ENCODE measurements at regions of chr10 and their contacts with region 1.

Region 1: DNA sequence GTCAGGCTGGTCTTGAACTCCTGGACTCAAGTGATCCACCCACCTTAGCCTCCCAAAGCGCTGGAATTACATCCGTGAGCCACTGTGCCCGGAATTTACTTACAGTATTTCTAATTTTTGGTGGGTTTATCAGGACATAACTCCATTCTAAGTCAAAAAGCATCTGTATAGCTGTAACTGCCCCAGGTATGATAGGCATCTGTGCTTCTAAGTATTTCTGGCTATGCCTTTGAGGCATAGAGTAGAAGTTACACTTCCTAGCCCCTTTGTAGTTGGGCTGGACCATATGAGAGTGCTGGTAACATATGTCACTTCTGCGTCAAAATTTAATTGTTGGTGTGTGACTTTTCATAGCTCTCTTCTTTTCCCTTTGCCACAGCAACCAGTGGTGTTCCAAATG is 153.4 kb downstream of the RTKN2 start:
- DNase-seq: no peak
- ATAC-seq: no peak
- H3K4me3 ChIP-seq: no peak overlapping the region
- H3K27ac ChIP-seq: no peak overlapping the region
- H3K4me1 ChIP-seq: peaks cover 8% of the 10 kb centered on the region; the same call in 1 of the 2 replicates
- H3K27me3 ChIP-seq: no peaks in the 10 kb centered on the region
- CTCF ChIP-seq: no peak

Region 2: GRCh38 chr10:61974601-61975390 is 140.5 kb before region 1 on chr10:
- CTCF ChIA-PET with region 1: no interaction called
- POLR2A ChIA-PET with region 1: no interaction called
- in situ Hi-C with region 1: no loop called
- intact Hi-C with region 1: no loop called
- DNase-seq: no peak
- ATAC-seq: no peak
- H3K4me3 ChIP-seq: no peak overlapping the region
- H3K27ac ChIP-seq: peak overlapping the region; percentile 58
- H3K4me1 ChIP-seq: peaks cover 45% of the 10 kb centered on the region
- H3K27me3 ChIP-seq: no peaks in the 10 kb centered on the region
- CTCF ChIP-seq: no peak

Region 3: DNA sequence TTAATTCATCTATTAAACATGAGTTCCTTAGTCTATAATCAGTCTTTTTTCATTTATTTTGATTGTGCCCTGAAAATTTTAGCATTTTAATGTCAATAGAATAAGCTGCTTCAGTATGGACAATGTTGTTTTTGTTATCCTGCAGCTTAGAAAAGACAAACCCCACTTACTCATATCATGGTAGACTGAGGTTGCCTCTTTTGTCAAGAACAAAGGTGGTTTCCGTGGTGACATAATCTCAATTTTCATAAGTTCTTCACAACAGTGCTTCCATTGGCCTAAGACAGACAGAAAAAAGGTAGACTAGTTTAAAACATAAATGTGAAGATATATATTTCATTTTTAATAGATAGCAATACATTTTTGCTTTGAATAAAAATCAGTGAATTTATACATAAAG is 84.3 kb after region 1 on chr10:
- CTCF ChIA-PET with region 1: no interaction called
- POLR2A ChIA-PET with region 1: no interaction called
- in situ Hi-C with region 1: no loop called
- intact Hi-C with region 1: no loop called
- DNase-seq: no peak
- ATAC-seq: no peak
- H3K4me3 ChIP-seq: no peak overlapping the region
- H3K27ac ChIP-seq: no peak overlapping the region
- H3K4me1 ChIP-seq: peaks cover 12% of the 10 kb centered on the region; the same call in 1 of the 2 replicates
- H3K27me3 ChIP-seq: no peaks in the 10 kb centered on the region
- CTCF ChIP-seq: no peak

Region 4: DNA sequence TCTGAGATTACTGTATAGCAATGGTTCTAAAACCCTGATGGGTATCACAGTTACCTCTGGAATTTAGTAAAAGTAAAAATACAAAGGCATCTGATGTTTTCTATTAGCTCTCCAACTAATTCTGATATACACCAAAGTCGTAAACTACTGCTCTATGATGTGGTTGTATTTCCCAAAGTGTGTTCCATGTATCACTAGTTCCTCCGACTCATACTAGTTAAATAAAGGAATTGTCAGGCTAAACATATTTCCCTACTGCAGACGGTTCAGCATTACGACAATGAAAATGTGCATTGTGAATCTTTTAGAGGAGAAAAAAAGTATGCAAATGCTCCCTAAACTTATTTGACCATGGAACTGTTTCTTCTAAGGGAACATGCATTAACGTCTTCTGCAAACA is 297.8 kb after region 1 on chr10:
- CTCF ChIA-PET with region 1: no interaction called
- POLR2A ChIA-PET with region 1: interaction called, 15 read pairs
- in situ Hi-C with region 1: no loop called
- intact Hi-C with region 1: no loop called
- DNase-seq: no peak
- ATAC-seq: no peak
- H3K4me3 ChIP-seq: no peak overlapping the region
- H3K27ac ChIP-seq: no peak overlapping the region
- H3K4me1 ChIP-seq: no peaks in the 10 kb centered on the region
- H3K27me3 ChIP-seq: no peaks in the 10 kb centered on the region
- CTCF ChIP-seq: no peak

Measured in Panc1 (cell line).